Activated T-helper 2 cell treated with anti-CD3 and anti-CD28 coated beads, Interferon-gamma antibody, Interleukin-2, Interleukin-4, amounts not matched to agents 10 μg/mL and 5 μg/mL and 100 μg/mL, durations not matched to agents 14 hours and 24 hours and 36 hours (primary cell): ENCODE measurements at regions of chr1 and their contacts with region 1.

Region 1: GRCh38 chr1:155562581-155563376 is at the start of gene ASH1L:
- DNase-seq: peak; percentile 87
- H3K4me3 Mint-ChIP-seq: peak within 1 kb of the TSS; percentile 99
- H3K27ac Mint-ChIP-seq: peak within 1 kb of the TSS; percentile 99
- H3K4me1 Mint-ChIP-seq: peaks cover 21% of the 10 kb centered on the region
- H3K27me3 Mint-ChIP-seq: no peaks in the 10 kb centered on the region
- total RNA-seq, gene ASH1L: 39.5 and 40.3 TPM in 2 replicates

Region 2: GRCh38 chr1:155540000-155540874 is 22.5 kb before region 1 on chr1:
- intact Hi-C with region 1: loop called (anchors 1 kb)
- DNase-seq: no peak
- H3K4me3 Mint-ChIP-seq: peak overlapping the region; percentile 20
- H3K27ac Mint-ChIP-seq: peak overlapping the region; percentile 68
- H3K4me1 Mint-ChIP-seq: peaks cover 43% of the 10 kb centered on the region
- H3K27me3 Mint-ChIP-seq: no peaks in the 10 kb centered on the region

Region 3: GRCh38 chr1:155688324-155689080 is 125.7 kb after region 1 on chr1 and contains the start of gene YY1AP1:
- intact Hi-C with region 1: loop called (anchors 2 kb)
- DNase-seq: peak; percentile 89
- H3K4me3 Mint-ChIP-seq: peak within 1 kb of the TSS; percentile 97
- H3K27ac Mint-ChIP-seq: peak within 1 kb of the TSS; percentile 96
- H3K4me1 Mint-ChIP-seq: peaks cover 52% of the 10 kb centered on the region
- H3K27me3 Mint-ChIP-seq: no peaks in the 10 kb centered on the region
- total RNA-seq, gene YY1AP1: 65.8 and 67.9 TPM in 2 replicates